ENCODE measurements at regions of chr4 and their contacts with region 1.

Region 1: GRCh38 chr4:109424093-109424841 is 9.3 kb upstream of the SEC24B start:
- DNase-seq: no peak
- CTCF ChIP-seq: no peak

Region 2: DNA sequence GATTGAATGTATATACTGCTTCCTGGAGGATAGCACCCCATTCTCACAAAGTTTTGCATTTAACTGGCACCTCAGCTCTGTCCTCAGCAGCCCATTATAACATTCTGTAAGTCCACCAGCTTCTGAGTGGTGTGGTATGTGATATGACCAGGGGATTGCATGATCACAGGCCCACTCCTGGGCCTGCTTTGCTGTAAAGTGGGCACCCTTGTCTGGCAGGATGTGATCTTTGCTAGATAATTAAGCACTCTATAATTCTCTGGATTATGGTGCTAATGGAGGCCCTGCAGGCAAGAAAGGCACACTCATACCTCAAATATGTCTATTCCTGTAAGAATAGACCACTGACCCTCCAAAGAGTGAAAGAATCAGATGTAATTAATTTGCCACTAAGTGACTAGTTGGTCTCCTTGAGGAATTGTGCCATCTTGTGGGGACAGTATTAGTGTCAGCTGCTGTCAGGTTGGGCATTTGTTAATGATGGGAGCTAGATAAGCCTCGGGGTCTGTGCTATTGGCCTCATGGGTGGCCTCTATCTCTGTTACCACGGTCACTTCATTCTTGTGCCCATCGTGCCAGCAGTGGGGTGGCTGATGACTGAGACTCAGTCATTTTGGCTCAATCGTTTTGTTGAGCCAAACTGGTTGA is 379.8 kb after region 1 on chr4:
- in situ Hi-C with region 1: loop called (anchors 10 kb)
- DNase-seq: peak; percentile 30
- CTCF ChIP-seq: peak; percentile 48